Thyroid gland (tissue), 4 donors: ENCODE measurements at regions of chr20 and their contacts with region 1.

Region 1: GRCh38 chr20:58870239-58871014 is 17.9 kb downstream of the GNAS start:
- DNase-seq: peak; percentile 78 to 83
- H3K4me3 ChIP-seq: no peak overlapping the region
- H3K27ac ChIP-seq: peak overlapping the region in 2 of 3 donors; percentile 91
- H3K4me1 ChIP-seq: peaks cover 18 to 36% of the 10 kb centered on the region in 2 donors
- H3K27me3 ChIP-seq: no peaks in the 10 kb centered on the region
- CTCF ChIP-seq: peak; percentile 59 to 88 (median 85)
- POLR2A ChIP-seq: no peak

Region 2: DNA sequence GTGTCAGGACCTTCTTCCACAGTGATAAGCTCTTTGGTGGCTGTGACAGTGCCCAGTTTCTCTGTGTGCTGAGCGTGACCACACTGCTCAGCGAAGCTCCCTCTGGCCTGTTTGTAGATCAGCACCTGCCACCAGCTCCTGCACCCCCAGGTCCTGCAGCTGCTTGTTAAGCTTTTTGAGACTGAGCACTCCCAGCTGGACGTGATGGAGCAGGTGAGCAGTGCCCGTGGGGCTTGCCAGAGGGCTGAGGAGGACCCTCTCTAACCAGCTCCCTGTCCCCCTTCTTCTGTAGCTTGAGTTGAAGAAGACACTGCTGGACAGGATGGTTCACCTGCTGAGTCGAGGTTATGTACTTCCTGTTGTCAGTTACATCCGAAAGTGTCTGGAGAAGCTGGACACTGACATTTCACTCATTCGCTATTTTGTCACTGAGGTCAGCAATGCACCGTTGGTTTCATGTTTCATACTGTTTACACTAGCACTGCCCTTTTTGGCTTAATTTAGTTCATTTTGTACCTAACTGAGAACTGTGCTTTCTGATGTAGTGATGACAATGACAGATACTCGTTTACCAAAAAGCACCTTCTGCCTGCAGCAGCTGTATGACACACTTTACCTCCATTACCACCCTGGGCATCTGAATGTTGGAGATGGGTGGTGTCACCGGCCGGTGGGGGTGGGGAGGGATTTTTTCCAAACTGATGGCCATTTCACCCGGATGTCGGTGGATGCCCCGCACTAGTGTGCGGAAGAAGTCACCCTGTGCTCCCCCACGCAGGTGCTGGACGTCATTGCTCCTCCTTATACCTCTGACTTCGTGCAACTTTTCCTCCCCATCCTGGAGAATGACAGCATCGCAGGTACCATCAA is 123.1 kb after region 1 on chr20:
- intact Hi-C with region 1: no loop called
- DNase-seq: peak in 1 of 2 donors; percentile 22
- H3K4me3 ChIP-seq: no peak overlapping the region
- H3K27ac ChIP-seq: peak overlapping the region in 2 of 3 donors; percentile 34 to 64
- H3K4me1 ChIP-seq: peaks cover 23 to 32% of the 10 kb centered on the region in 2 donors
- H3K27me3 ChIP-seq: no peaks in the 10 kb centered on the region
- CTCF ChIP-seq: no peak
- POLR2A ChIP-seq: no peak

Region 3: DNA sequence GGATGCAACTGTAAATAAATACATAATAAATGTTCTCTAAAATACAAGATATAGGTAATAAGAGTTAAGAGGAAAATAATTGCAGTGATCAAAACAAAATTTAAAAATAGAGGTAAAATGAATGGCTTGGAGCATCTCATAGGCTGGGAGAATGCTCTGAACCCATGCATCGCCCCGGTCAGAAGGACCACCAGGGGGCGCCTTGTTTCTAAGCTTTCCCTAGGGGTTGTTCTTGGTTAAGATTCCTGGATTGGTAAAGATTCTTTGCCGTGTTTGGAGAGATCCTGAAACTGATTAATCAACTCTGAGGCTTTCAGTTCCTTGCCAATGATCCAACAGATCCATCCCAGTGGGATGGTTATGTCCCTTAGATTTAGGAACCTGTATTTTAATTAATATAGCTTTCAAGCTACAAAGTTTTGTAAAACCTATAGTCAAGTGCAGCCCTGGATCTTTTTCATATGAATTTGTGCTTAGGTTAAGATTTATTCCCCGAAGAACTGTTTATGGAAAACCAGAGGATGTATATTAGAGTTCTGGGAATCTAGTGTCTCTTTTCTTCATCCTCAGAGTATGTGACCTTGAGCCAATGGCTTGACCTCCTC is 217.5 kb after region 1 on chr20:
- intact Hi-C with region 1: loop called (anchors 5 kb)
- DNase-seq: peak; percentile 86 to 88
- H3K4me3 ChIP-seq: no peak overlapping the region
- H3K27ac ChIP-seq: no peak overlapping the region
- H3K4me1 ChIP-seq: peaks cover 17 to 18% of the 10 kb centered on the region in 2 donors
- H3K27me3 ChIP-seq: no peaks in the 10 kb centered on the region
- CTCF ChIP-seq: peak; percentile 78 to 87 (median 83)
- POLR2A ChIP-seq: no peak

Region 4: GRCh38 chr20:59222253-59223181 is 352.1 kb after region 1 on chr20:
- intact Hi-C with region 1: loop called (anchors 5 kb)
- DNase-seq: peak; percentile 80 to 82
- H3K4me3 ChIP-seq: peak overlapping the region in 1 of 3 donors; percentile 40
- H3K27ac ChIP-seq: peak overlapping the region; percentile 4 to 84 (median 37)
- H3K4me1 ChIP-seq: peaks cover 24 to 26% of the 10 kb centered on the region in 2 donors
- H3K27me3 ChIP-seq: no peaks in the 10 kb centered on the region
- CTCF ChIP-seq: peak; percentile 73 to 96 (median 90)
- POLR2A ChIP-seq: no peak

Region 5: DNA sequence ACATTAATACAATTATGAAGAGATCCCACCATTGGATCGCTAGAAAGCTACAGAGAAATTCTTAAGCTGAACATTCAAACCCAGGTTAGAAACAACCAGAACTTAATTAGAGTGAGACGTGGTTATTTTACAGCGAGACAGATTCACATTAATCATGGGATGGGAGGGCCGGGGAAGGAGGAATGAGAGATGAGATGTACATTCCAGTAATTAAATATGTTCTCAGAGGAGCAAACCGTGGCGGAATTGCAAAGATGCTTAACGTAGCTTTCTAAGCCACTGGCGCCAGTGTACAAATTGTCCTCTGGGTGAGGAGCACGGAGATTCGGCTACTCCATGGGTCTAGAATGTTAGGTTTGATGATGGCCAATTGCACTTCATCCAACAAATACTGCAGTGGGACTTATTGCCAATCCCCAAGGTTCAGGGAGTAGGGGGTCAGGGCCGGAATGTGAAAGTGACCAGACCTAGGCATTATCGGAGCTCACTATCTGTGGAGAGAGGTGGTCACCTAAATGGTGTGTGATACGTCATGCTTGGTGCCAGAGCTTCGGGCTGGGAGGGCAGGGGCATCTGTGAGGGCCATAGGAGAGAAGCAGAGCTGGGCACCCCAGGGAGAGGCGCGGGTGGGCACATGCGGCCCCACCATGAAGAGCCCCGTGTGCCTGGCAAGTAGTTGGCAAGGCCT is 544.7 kb after region 1 on chr20:
- intact Hi-C with region 1: loop called (anchors 5 kb)
- DNase-seq: no peak
- H3K4me3 ChIP-seq: no peak overlapping the region
- H3K27ac ChIP-seq: no peak overlapping the region
- H3K4me1 ChIP-seq: no peaks in the 10 kb centered on the region
- H3K27me3 ChIP-seq: no peaks in the 10 kb centered on the region
- CTCF ChIP-seq: no peak
- POLR2A ChIP-seq: no peak

Region 6: GRCh38 chr20:59495894-59496510 is 625.6 kb after region 1 on chr20:
- intact Hi-C with region 1: loop called (anchors 5 kb)
- DNase-seq: peak; percentile 72 to 81
- H3K4me3 ChIP-seq: no peak overlapping the region
- H3K27ac ChIP-seq: no peak overlapping the region
- H3K4me1 ChIP-seq: no peaks in the 10 kb centered on the region
- H3K27me3 ChIP-seq: no peaks in the 10 kb centered on the region
- CTCF ChIP-seq: peak; percentile 51 to 89 (median 74)
- POLR2A ChIP-seq: no peak